ENCODE measurements at regions of chr17 and their contacts with region 1.

Region 1: GRCh38 chr17:41737680-41738023 is 3.2 kb upstream of the HAP1 start:
- DNase-seq: no peak
- ATAC-seq: peak; percentile 4

Region 2: GRCh38 chr17:41801374-41802271 is 64.0 kb after region 1 on chr17:
- intact Hi-C with region 1: loop called (anchors 2 kb)
- DNase-seq: peak; percentile 91
- ATAC-seq: peak; percentile 91

Measured in sciatic nerve (tissue), 2 donors.